Caco-2 (cell line): ENCODE measurements at regions of chr14 and their contacts with region 1.

Region 1: GRCh38 chr14:29710015-29710565 is 217.6 kb downstream of the PRKD1 start:
- DNase-seq: no peak
- H3K4me3 ChIP-seq: no peak overlapping the region
- H3K4me3 Mint-ChIP-seq: no peak overlapping the region
- H3K27ac Mint-ChIP-seq: no peak overlapping the region
- H3K4me1 ChIP-seq: no peaks in the 10 kb centered on the region
- H3K4me1 Mint-ChIP-seq: no peaks in the 10 kb centered on the region
- H3K27me3 ChIP-seq: no peaks in the 10 kb centered on the region
- H3K27me3 Mint-ChIP-seq: no peaks in the 10 kb centered on the region
- CTCF ChIP-seq: peak in 1 of 2 experiments; percentile 26

Region 2: DNA sequence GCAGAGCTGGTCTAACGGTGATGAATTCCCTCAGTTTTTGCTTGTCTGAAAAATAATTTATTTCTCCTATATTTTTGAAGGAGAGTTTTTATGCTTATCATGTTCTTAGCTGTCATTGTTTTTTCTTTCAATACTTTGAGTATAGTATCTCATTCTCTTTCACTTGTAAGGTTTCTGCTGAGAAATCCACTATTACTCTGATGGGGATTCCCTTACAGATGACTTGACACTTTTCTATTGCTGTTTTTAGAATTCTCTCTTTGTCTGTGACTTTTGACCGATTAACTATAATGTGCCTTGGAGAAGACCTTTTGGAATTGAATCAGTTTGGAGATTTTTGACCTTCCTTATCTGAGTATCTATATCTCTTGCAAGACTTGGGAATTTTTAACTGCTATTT is 78.0 kb after region 1 on chr14:
- CTCF ChIA-PET with region 1: no interaction called
- POLR2A ChIA-PET with region 1: no interaction called
- intact Hi-C with region 1: no loop called
- DNase-seq: no peak
- H3K4me3 ChIP-seq: no peak overlapping the region
- H3K4me3 Mint-ChIP-seq: no peak overlapping the region
- H3K27ac Mint-ChIP-seq: no peak overlapping the region
- H3K4me1 ChIP-seq: no peaks in the 10 kb centered on the region
- H3K4me1 Mint-ChIP-seq: no peaks in the 10 kb centered on the region
- H3K27me3 ChIP-seq: no peaks in the 10 kb centered on the region
- H3K27me3 Mint-ChIP-seq: peaks cover 7% of the 10 kb centered on the region
- CTCF ChIP-seq: no peak

Region 3: DNA sequence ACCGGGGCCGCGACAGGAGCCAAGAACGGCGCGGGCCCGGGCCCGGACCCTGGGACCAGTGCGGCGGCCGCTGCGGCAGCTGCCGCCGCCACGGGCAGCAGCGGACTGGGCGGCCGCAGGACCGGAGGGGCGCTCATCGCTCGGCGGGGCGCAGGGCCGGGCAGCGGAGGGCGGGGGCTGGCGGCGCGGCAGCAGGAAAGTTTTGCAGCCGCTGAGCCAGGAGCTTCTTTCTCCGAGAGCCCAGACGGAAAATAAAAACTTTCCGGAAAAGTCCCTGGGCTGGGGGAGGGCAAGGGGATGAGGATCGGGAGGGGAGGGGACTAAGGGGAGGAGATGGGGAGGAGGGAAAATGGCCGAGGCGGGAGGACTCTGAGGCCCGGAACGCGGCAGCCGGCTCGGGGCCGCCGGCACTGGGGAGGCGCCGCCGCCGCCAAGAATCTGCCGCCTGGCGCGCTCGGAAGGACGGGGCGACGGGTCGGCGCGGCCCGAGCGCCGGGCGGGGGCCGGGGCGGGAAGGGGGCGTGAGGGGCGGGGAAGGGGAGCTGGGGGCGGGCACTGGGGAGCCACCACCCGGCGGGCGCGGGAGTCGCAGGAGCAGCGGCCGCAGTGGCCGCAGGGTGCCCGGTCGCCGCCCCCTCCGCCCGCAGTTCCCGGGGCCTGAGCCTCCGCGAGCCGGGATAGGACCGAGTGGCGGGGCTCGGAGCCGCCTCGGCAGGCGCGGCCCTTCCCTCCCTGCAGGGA is 217.5 kb after region 1 on chr14 and contains the start of gene PRKD1:
- CTCF ChIA-PET with region 1: no interaction called
- POLR2A ChIA-PET with region 1: no interaction called
- intact Hi-C with region 1: loop called (anchors 10 kb)
- DNase-seq: peak in 1 of 2 experiments; percentile 56
- H3K4me3 ChIP-seq: peak within 1 kb of the TSS; percentile 46
- H3K4me3 Mint-ChIP-seq: peak within 1 kb of the TSS; percentile 79
- H3K27ac Mint-ChIP-seq: no peak within 1 kb of the TSS
- H3K4me1 ChIP-seq: no peaks in the 10 kb centered on the region
- H3K4me1 Mint-ChIP-seq: peaks cover 8% of the 10 kb centered on the region
- H3K27me3 ChIP-seq: peaks cover 2% of the 10 kb centered on the region; the same call in 1 of the 2 replicates
- H3K27me3 Mint-ChIP-seq: peaks cover 20% of the 10 kb centered on the region
- CTCF ChIP-seq: no peak
- total RNA-seq, gene PRKD1: 0.36 and 0.49 TPM in 2 replicates

Region 4: DNA sequence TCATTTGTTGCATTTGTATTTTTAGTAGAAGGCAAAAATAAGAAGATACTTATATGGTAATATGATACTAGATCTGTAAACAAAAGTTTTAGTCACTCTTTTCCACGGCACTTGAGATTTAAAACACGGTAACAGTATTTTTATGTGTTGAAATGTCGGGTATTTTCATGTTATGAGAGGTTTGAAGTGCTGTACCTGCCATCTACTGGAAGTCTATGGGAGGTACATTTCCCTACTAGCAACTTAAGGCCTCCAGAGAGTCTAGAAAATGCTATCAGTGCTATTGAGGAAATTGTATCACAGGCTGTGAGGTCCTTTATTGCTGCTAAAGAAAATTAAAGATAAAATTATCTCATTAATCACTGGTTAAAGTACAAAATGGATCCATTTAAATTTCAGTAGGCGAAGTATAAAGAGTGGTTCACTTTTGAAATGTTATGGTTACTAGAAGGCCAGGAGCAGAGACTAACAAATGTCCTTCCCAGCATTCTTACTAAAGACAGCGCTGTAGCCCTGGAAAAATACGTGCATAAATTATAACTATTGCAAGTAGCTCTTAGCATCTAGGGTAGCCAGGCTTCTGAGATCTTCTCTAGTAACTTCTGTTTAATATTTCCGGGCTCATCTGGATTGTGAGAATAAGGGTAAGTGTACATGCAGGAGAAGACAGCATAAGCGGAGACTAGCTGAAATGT is 295.2 kb after region 1 on chr14:
- CTCF ChIA-PET with region 1: no interaction called
- POLR2A ChIA-PET with region 1: no interaction called
- intact Hi-C with region 1: loop called (anchors 1 kb)
- DNase-seq: peak in 1 of 2 experiments; percentile 20
- H3K4me3 ChIP-seq: no peak overlapping the region
- H3K4me3 Mint-ChIP-seq: no peak overlapping the region
- H3K27ac Mint-ChIP-seq: no peak overlapping the region
- H3K4me1 ChIP-seq: no peaks in the 10 kb centered on the region
- H3K4me1 Mint-ChIP-seq: no peaks in the 10 kb centered on the region
- H3K27me3 ChIP-seq: no peaks in the 10 kb centered on the region
- H3K27me3 Mint-ChIP-seq: peaks cover 9% of the 10 kb centered on the region
- CTCF ChIP-seq: peak; percentile 56 to 58